ENCODE measurements at regions of chr5 and their contacts with region 1.

Region 1: DNA sequence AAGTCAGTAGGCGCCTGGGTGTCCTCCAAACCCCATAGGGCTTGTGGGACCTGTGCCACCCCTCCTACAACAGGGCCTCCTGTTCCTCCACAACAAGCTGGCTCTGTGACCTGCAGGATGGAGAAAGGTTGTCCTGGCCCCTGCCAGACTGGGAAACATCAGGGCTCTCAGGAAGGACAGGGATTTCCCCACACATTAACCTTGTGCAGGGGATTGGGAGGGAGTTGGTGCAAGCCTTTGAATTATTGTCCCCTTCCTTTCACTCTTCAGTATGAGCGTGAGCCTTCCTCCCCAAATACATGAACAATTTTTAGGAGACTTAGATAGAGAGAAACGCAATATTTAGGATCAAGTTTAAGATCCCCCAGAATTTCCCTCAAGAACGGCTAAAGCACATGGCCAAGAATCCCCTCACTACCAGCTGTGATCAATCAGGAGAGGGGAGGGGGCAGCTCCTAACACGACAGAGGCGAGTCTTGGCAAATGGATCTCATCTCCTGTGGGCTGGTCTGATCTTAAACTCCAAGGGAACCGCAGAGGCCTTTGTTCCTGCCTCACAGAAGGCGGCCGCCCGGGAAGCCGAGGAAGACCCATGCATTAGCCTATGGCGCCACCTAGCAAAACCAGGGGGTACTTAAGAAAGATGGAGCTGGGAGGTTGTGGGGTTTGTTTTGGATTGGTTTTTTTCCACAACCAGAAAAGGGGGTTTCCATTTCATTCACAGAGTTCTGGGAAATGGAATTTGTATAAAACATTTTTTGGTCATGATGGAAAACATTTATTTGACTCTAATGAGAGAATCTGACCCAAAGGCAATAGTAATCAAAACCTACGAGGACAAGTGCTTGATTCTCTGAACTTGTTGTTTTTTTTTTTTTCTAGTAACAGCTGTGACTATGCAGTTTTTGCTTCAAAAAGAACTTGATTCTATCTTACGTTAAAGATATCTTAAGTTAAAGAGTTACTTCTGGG is 36.1 kb upstream of the OSMR start:
- DNase-seq: peak; percentile 77
- H3K4me3 Mint-ChIP-seq: no peak overlapping the region
- H3K27ac Mint-ChIP-seq: no peak overlapping the region
- H3K4me1 Mint-ChIP-seq: peaks cover 15% of the 10 kb centered on the region
- H3K27me3 Mint-ChIP-seq: peaks cover 9% of the 10 kb centered on the region
- CTCF ChIP-seq: peak; percentile 72

Region 2: DNA sequence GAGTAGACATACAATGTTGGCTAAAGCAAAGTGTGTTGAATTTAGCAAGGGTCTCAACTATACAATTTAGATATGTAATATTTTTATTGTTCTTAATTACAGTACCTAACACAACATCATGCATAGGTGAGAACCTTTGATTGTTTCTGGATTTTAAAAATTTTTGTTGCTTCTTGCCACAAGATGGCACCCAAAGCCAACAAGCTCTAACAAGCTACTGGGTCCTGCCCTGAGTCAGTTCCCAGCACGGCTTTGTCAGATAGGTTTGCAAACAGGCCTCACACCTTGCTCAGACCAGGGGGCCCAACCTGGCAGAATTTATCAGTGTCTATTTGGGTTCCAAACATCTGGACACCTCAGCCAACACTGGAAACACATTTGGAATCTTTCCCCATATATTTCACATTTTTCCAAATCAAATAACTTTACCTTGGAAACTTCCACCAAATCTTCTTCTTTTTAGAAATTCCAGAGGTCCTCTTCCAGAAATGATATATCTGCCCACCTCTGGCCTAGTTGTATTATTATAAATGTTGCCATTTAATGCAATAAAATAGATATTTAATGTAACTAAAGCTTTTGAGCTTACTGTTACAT is 600.8 kb before region 1 on chr5:
- CTCF ChIA-PET with region 1: no interaction called
- intact Hi-C with region 1: loop called (anchors 10 kb)
- DNase-seq: peak; percentile 40
- H3K4me3 Mint-ChIP-seq: no peak overlapping the region
- H3K27ac Mint-ChIP-seq: no peak overlapping the region
- H3K4me1 Mint-ChIP-seq: no peaks in the 10 kb centered on the region
- H3K27me3 Mint-ChIP-seq: peaks cover 59% of the 10 kb centered on the region
- CTCF ChIP-seq: no peak

Region 3: DNA sequence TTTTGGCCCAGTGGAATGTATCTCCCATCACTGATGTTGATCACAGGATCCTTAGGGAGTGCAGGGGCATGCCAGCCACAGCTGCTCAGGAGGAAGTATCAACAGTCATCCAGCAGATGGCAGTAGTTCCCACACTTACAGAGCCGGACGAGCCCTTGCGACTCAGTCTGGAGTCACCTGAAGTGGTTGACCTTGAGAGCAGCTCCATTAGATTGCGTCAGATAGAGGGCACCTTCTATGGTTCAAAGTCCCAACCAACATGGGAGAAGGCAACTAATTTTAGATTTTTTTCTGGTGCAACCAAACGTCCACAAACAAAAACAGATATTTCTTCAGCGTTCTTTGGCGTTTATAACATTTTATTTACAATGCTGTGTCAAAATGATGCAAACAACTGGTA is 426.8 kb before region 1 on chr5:
- CTCF ChIA-PET with region 1: interaction called, 15 read pairs
- intact Hi-C with region 1: loop called (anchors 5 kb)
- DNase-seq: peak; percentile 76
- H3K4me3 Mint-ChIP-seq: no peak overlapping the region
- H3K27ac Mint-ChIP-seq: no peak overlapping the region
- H3K4me1 Mint-ChIP-seq: no peaks in the 10 kb centered on the region
- H3K27me3 Mint-ChIP-seq: peaks cover 52% of the 10 kb centered on the region
- CTCF ChIP-seq: peak; percentile 59

Region 4: DNA sequence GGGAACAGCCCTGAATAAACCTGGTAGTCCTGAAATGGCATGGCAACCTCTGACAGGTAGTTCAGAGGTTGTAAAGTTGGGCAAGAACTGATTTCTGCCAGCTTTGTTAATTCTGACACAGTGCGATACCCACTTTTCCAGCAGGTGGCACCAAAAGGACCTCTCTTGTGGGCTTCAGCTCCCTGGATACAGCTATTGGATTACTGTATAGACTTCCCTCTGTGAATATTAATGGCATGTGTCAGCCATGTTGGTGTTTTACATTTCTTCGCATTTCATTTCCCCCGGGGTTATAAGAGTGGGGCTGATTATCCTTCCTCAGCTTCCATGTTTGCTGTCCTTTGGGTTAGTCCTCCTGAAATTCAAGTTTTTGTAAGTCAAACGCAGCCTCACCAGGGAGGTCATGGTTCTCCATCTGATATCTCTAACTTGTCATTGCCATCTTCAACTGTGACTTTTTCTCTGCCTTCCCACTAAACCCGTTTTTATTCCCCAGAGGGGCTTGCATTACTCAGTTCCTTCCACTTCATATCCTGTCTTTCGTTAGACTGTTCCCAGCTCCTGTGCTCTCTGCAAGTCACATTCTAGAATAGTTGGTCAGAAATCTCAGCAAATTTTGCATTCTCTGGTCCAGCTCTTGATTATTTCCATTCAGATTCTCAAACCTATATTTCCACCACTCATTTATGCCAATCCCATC is 388.8 kb before region 1 on chr5:
- CTCF ChIA-PET with region 1: interaction called, 29 read pairs
- intact Hi-C with region 1: loop called (anchors 1 kb)
- DNase-seq: peak; percentile 63
- H3K4me3 Mint-ChIP-seq: no peak overlapping the region
- H3K27ac Mint-ChIP-seq: no peak overlapping the region
- H3K4me1 Mint-ChIP-seq: no peaks in the 10 kb centered on the region
- H3K27me3 Mint-ChIP-seq: peaks cover 70% of the 10 kb centered on the region
- CTCF ChIP-seq: peak; percentile 74

Region 5: GRCh38 chr5:38551030-38552017 is 258.4 kb before region 1 on chr5:
- CTCF ChIA-PET with region 1: interaction called, 4 read pairs
- intact Hi-C with region 1: loop called (anchors 5 kb)
- DNase-seq: peak; percentile 22
- H3K4me3 Mint-ChIP-seq: no peak overlapping the region
- H3K27ac Mint-ChIP-seq: no peak overlapping the region
- H3K4me1 Mint-ChIP-seq: peaks cover 6% of the 10 kb centered on the region
- H3K27me3 Mint-ChIP-seq: no peaks in the 10 kb centered on the region
- CTCF ChIP-seq: peak; percentile 75

Region 6: DNA sequence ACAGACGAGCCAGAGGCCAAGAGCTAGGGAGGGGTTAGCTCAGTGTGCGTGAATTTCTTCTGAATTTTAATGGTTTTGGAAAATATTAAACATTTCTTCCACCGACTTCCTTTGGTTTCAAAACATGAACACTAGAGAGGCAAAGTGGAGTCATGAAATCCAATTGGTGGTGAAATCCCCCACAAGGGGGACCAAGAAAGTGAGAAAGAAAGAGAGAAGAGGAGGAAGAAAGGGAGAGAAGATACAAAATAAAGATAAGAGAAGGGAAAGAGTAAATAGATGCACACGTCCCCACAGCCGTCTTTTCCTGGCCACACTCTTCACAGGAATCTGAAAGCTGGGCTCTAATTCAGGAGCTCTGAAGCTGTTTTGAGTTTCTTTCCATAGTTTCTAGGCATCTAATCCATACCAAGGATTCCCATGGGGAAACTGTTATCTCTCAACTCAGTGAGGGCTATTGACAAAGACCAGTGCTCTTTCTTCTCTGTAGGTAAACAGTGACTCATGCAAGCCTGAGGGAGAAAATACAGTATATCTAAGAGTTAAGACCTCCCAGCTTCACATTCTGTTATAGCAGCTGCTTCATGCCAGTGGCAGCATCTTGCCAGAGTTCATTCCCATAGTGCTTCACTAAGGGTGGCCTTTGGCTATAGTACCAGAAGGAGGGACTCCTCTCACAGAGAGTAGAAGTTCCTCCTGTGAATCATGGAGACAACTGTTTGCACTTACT is 137.4 kb before region 1 on chr5:
- CTCF ChIA-PET with region 1: interaction called, 3 read pairs
- intact Hi-C with region 1: loop called (anchors 5 kb)
- DNase-seq: no peak
- H3K4me3 Mint-ChIP-seq: no peak overlapping the region
- H3K27ac Mint-ChIP-seq: no peak overlapping the region
- H3K4me1 Mint-ChIP-seq: no peaks in the 10 kb centered on the region
- H3K27me3 Mint-ChIP-seq: peaks cover 29% of the 10 kb centered on the region
- CTCF ChIP-seq: no peak

Region 7: DNA sequence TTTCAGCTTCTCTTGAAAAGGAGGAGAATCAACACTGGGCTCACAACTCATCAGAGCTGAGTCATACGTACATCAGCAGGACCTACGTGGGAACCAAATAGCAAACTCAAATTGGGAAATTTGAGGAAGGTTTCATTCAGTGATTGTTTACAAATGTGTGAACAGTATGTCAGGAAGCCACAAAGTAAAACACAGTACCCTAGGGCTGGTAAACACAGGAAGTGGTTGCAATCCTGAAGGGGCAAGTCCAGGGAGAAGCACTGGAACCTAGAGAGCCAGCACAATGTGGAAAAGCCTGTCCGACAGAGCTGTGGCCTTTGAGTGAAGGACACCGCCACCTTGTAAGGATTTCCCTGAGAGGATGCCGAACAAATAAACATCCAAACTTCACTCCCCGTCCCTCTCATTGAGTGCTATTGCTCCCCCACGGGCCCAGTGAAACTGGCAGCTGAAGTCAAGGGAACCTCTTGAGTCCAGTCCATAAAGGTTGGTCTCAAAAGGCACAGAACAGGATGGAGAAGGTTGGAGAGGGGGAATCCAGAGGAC is 291.2 kb after region 1 on chr5:
- CTCF ChIA-PET with region 1: no interaction called
- intact Hi-C with region 1: no loop called
- DNase-seq: peak; percentile 65
- H3K4me3 Mint-ChIP-seq: no peak overlapping the region
- H3K27ac Mint-ChIP-seq: peak overlapping the region; percentile 33
- H3K4me1 Mint-ChIP-seq: peaks cover 55% of the 10 kb centered on the region
- H3K27me3 Mint-ChIP-seq: no peaks in the 10 kb centered on the region
- CTCF ChIP-seq: no peak